ENCODE measurements at regions of chr5 and their contacts with region 1.

Region 1: DNA sequence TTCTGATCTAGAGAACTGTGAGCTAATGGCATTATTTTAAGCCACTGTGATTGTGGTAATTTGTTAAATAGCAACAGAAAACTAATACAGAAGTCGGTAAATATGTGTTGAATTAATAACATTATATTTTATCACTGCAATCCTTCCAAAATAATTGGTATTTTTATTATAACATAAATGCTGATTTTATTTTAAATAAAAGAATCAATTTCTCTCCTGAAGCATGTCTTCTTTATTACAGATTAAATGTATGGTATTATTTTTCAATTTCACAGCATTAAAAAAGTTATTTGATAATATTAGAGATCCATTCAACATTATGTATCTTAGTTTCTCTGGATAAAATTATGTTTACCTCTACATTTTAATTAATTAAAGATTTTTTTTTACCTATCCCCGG is 165.5 kb upstream of the EDIL3 start:
- DNase-seq: no peak
- H3K4me3 ChIP-seq: no peak overlapping the region
- H3K27ac ChIP-seq: no peak overlapping the region
- H3K27me3 ChIP-seq: no peaks in the 10 kb centered on the region
- CTCF ChIP-seq: no peak

Region 2: GRCh38 chr5:84287951-84288350 is 262.3 kb before region 1 on chr5:
- intact Hi-C with region 1: loop called in 1 of 2 experiments (anchors 10 kb)
- DNase-seq: no peak
- H3K4me3 ChIP-seq: no peak overlapping the region
- H3K27ac ChIP-seq: peak overlapping the region in 53 of 59 donors; percentile 3 to 98 (median 93)
- H3K27me3 ChIP-seq: no peaks in the 10 kb centered on the region
- CTCF ChIP-seq: no peak

Measured in dorsolateral prefrontal cortex (tissue), 120 donors.